Endothelial cell of umbilical vein (primary cell): ENCODE measurements at regions of chr7 and their contacts with region 1.

Region 1: GRCh38 chr7:106285051-106285854 is 470 bp upstream of the NAMPT start:
- DNase-seq: peak; percentile 99
- H3K4me3 ChIP-seq: peak overlapping the region; percentile 56 to 80 (median 72)
- H3K27ac ChIP-seq: peak overlapping the region; percentile 80
- H3K4me1 ChIP-seq: peaks cover 27% of the 10 kb centered on the region
- H3K27me3 ChIP-seq: no peaks in the 10 kb centered on the region
- CTCF ChIP-seq: no peak
- POLR2A ChIP-seq: peak; percentile 93

Region 2: DNA sequence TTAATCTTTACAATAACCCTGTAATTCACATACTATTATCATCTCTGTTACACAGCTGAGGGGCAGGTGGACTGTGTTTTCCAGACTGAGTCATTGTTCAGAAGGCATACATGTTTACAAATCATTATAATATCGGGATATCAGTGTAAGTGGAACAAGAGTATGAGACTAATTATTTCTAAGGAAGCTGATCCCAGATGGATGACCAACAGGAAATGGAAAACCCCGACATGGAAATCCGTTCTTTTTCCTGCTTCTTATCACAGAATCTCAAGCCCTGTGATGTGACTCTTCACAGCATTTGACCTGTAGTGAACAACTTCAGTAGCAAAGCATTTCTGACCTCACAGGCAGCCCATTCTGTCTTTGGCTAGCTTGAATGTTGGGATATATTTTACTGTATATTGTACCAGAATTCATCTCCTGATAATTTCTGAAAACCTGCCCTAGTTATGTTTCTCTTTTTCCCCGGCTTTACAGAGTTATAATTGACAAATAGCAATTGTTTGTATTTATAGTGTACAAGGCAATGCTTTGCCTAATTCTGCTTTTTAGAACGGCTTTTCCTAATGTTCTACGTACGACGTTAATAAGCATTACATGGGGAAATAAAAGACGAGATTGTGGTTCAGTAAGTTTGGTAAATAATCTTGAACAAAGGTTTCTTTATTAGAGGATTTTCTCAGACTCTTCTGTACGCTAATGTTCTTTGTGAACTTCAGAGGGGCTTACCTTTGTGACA is 94.5 kb before region 1 on chr7:
- CTCF ChIA-PET with region 1: interaction called, 4 read pairs
- POLR2A ChIA-PET with region 1: interaction called, 6 read pairs
- dilution Hi-C with region 1: no loop called
- intact Hi-C with region 1: loop called (anchors 2 kb)
- DNase-seq: peak; percentile 89
- H3K4me3 ChIP-seq: no peak overlapping the region
- H3K27ac ChIP-seq: peak overlapping the region; percentile 51
- H3K4me1 ChIP-seq: peaks cover 20% of the 10 kb centered on the region
- H3K27me3 ChIP-seq: no peaks in the 10 kb centered on the region
- CTCF ChIP-seq: no peak
- POLR2A ChIP-seq: peak; percentile 67

Region 3: DNA sequence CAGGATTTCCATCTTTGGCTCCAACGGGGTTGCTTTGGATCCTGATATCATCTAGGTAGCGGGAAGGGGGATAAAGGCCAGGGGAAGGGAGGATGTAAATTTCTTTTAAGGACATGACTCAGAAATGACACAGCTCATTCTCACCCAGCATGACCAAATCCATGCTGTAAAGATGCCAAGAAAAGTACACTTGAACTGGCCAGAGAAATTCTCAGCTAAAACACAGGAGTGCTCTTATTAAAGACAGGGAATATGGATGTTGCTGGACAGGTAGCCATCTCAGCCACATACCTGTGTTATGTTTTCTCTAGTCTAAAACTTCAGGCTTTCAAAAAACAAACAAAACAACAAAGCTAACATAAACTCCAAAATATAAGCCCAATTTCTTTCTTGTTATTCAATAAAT is 68.7 kb before region 1 on chr7:
- CTCF ChIA-PET with region 1: interaction called, 3 read pairs
- POLR2A ChIA-PET with region 1: interaction called, 9 read pairs
- dilution Hi-C with region 1: no loop called
- intact Hi-C with region 1: loop called (anchors 1 kb)
- DNase-seq: peak; percentile 96
- H3K4me3 ChIP-seq: peak overlapping the region in 1 of 3 experiments; percentile 46
- H3K27ac ChIP-seq: peak overlapping the region; percentile 94
- H3K4me1 ChIP-seq: peaks cover 42% of the 10 kb centered on the region
- H3K27me3 ChIP-seq: no peaks in the 10 kb centered on the region
- CTCF ChIP-seq: no peak
- POLR2A ChIP-seq: peak; percentile 22

Region 4: GRCh38 chr7:106225856-106226255 is 59.4 kb before region 1 on chr7:
- CTCF ChIA-PET with region 1: no interaction called
- POLR2A ChIA-PET with region 1: no interaction called
- dilution Hi-C with region 1: no loop called
- intact Hi-C with region 1: loop called (anchors 2 kb)
- DNase-seq: no peak
- H3K4me3 ChIP-seq: no peak overlapping the region
- H3K27ac ChIP-seq: no peak overlapping the region
- H3K4me1 ChIP-seq: peaks cover 4% of the 10 kb centered on the region
- H3K27me3 ChIP-seq: no peaks in the 10 kb centered on the region
- CTCF ChIP-seq: no peak
- POLR2A ChIP-seq: no peak

Region 5: DNA sequence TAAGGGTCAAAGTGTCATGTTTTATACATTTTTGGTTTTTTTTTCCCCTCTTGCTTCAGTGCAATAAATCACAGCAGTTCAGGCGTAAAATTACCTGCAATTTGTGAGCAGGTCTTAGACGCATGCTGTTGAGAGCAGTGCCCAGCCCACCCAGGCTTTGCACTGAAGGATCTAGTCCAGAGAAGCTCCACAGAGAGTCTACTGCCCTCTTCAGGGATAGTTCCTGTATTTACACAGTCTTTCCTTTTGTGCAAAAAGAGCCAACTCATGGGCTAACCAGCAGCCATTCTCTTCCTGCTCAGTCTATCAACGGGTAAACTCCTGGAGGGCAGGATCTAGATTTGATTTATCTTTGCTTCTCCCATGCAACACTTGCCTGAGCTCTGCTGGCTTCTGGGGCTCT is 81.8 kb after region 1 on chr7:
- CTCF ChIA-PET with region 1: interaction called, 3 read pairs
- POLR2A ChIA-PET with region 1: interaction called, 3 read pairs
- dilution Hi-C with region 1: no loop called
- intact Hi-C with region 1: loop called (anchors 5 kb)
- DNase-seq: peak; percentile 15
- H3K4me3 ChIP-seq: no peak overlapping the region
- H3K27ac ChIP-seq: no peak overlapping the region
- H3K4me1 ChIP-seq: no peaks in the 10 kb centered on the region
- H3K27me3 ChIP-seq: peaks cover 0 to 2% of the 10 kb centered on the region in 2 experiments
- CTCF ChIP-seq: peak; percentile 23 to 36
- POLR2A ChIP-seq: no peak

Region 6: GRCh38 chr7:106717955-106718871 is 433.0 kb after region 1 on chr7:
- CTCF ChIA-PET with region 1: no interaction called
- POLR2A ChIA-PET with region 1: no interaction called
- dilution Hi-C with region 1: no loop called
- intact Hi-C with region 1: no loop called
- DNase-seq: peak; percentile 98
- H3K4me3 ChIP-seq: peak overlapping the region in 1 of 3 experiments; percentile 26
- H3K27ac ChIP-seq: peak overlapping the region; percentile 99
- H3K4me1 ChIP-seq: peaks cover 28% of the 10 kb centered on the region
- H3K27me3 ChIP-seq: no peaks in the 10 kb centered on the region
- CTCF ChIP-seq: no peak
- POLR2A ChIP-seq: peak; percentile 45

Region 7: GRCh38 chr7:106736508-106737201 is 451.4 kb after region 1 on chr7:
- CTCF ChIA-PET with region 1: no interaction called
- POLR2A ChIA-PET with region 1: interaction called, 3 read pairs
- dilution Hi-C with region 1: no loop called
- intact Hi-C with region 1: loop called (anchors 2 kb)
- DNase-seq: peak; percentile 84
- H3K4me3 ChIP-seq: no peak overlapping the region
- H3K27ac ChIP-seq: peak overlapping the region; percentile 37
- H3K4me1 ChIP-seq: peaks cover 18% of the 10 kb centered on the region
- H3K27me3 ChIP-seq: no peaks in the 10 kb centered on the region
- CTCF ChIP-seq: peak; percentile 65 to 74
- POLR2A ChIP-seq: no peak

Region 8: DNA sequence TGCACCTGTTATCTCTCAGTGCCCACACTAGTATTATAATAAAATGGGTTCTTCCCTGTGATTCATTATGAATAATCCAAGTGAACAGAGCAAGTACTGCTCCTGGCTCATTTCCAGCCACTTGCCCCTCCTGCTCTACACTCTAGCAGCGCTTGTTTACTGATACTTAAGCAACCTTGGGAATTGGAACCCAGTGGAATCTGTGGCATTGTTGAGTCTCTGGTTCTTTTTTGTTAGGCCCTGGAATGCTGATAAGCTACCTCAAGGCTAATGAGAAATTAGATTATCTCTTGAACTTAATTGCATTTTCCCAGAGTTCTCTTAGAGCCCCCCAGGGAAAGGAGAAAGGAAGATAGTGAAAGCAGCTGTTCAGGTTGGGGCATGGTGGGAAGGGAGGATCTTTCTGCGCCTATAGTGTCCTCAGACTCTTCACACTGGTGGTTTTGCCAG is 793.3 kb after region 1 on chr7:
- CTCF ChIA-PET with region 1: no interaction called
- POLR2A ChIA-PET with region 1: no interaction called
- dilution Hi-C with region 1: no loop called
- intact Hi-C with region 1: loop called (anchors 5 kb)
- DNase-seq: peak; percentile 95
- H3K4me3 ChIP-seq: peak overlapping the region in 1 of 3 experiments; percentile 40
- H3K27ac ChIP-seq: peak overlapping the region; percentile 95
- H3K4me1 ChIP-seq: peaks cover 51% of the 10 kb centered on the region
- H3K27me3 ChIP-seq: no peaks in the 10 kb centered on the region
- CTCF ChIP-seq: no peak
- POLR2A ChIP-seq: peak; percentile 39